ENCODE measurements at regions of chr10 and their contacts with region 1.

Region 1: GRCh38 chr10:97210543-97210961 is 24.8 kb upstream of the SLIT1 start:
- DNase-seq: peak; percentile 47 to 82 (median 71)
- ATAC-seq: peak; percentile 52
- H3K4me3 ChIP-seq: no peak overlapping the region
- H3K4me3 Mint-ChIP-seq: no peak overlapping the region
- H3K27ac ChIP-seq: no peak overlapping the region
- H3K27ac Mint-ChIP-seq: no peak overlapping the region
- H3K4me1 ChIP-seq: no peaks in the 10 kb centered on the region
- H3K4me1 Mint-ChIP-seq: no peaks in the 10 kb centered on the region
- H3K27me3 ChIP-seq: no peaks in the 10 kb centered on the region
- H3K27me3 Mint-ChIP-seq: peaks cover 1% of the 10 kb centered on the region
- CTCF ChIP-seq: peak; percentile 98

Region 2: GRCh38 chr10:96395931-96396877 is 814.3 kb before region 1 on chr10:
- CTCF ChIA-PET with region 1: interaction called, 10 read pairs
- POLR2A ChIA-PET with region 1: no interaction called
- intact Hi-C with region 1: loop called in 1 of 2 experiments (anchors 2 kb)
- DNase-seq: peak; percentile 16 to 78 (median 53)
- ATAC-seq: peak; percentile 88
- H3K4me3 ChIP-seq: no peak overlapping the region
- H3K4me3 Mint-ChIP-seq: peak overlapping the region; percentile 57
- H3K27ac ChIP-seq: no peak overlapping the region
- H3K27ac Mint-ChIP-seq: no peak overlapping the region
- H3K4me1 ChIP-seq: no peaks in the 10 kb centered on the region
- H3K4me1 Mint-ChIP-seq: no peaks in the 10 kb centered on the region
- H3K27me3 ChIP-seq: peaks cover 0 to 3% of the 10 kb centered on the region in 2 experiments
- H3K27me3 Mint-ChIP-seq: peaks cover 12% of the 10 kb centered on the region
- CTCF ChIP-seq: peak; percentile 79

Region 3: DNA sequence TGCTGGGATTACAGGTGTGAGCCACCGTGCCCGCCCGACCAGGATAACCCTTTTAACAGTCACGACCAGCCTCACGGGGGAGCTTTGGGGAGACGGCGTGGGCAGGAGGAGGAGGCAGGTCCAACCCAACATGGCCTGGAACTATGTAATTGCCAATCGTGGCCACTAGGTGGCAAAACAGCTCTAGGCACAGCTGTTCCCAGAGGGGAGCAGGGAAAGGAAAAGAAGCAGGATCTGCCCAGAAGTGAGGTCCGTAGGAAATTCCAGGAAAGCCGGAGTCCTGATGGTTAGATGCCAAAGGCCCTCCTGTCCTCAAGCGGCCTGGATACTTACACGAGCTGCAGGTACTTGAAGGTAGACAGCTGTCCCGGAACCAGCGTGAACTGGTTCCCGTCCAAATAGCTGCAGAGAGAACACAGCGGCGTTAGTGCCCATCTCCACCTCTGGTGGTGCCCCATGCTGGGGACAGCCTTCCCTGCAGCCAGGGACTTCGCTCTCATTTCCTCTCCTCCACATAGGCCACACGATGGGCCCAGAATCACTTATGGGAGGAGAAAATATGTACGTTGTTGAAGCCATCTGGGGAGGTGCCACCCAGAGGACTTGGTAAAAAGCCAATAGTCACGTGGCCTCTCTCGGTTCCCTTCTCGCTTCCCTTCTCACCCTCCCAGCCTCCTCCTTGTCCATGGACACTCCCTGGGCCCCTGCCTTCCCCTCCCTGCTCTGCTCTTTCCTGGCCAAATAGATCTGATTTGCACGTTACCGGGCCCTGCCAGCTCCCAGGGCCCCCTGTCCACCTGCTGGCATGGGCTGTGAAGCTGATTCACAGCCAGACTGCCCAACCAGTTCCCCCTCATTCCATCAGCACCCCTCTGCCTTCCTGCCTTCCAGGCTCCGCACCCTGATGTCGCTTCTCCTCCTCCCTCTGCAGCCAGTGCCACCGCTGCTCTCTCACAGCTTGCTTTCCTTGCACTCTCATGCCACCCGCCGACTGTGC is 172.9 kb before region 1 on chr10:
- CTCF ChIA-PET with region 1: interaction called, 48 read pairs
- POLR2A ChIA-PET with region 1: no interaction called
- intact Hi-C with region 1: loop called in 1 of 2 experiments (anchors 1 kb)
- DNase-seq: peak; percentile 35 to 81 (median 67)
- ATAC-seq: peak; percentile 92
- H3K4me3 ChIP-seq: peak overlapping the region; percentile 35 to 44
- H3K4me3 Mint-ChIP-seq: peak overlapping the region; percentile 73
- H3K27ac ChIP-seq: no peak overlapping the region
- H3K27ac Mint-ChIP-seq: no peak overlapping the region
- H3K4me1 ChIP-seq: no peaks in the 10 kb centered on the region
- H3K4me1 Mint-ChIP-seq: peaks cover 8% of the 10 kb centered on the region
- H3K27me3 ChIP-seq: no peaks in the 10 kb centered on the region
- H3K27me3 Mint-ChIP-seq: no peaks in the 10 kb centered on the region
- CTCF ChIP-seq: peak; percentile 92

Region 4: DNA sequence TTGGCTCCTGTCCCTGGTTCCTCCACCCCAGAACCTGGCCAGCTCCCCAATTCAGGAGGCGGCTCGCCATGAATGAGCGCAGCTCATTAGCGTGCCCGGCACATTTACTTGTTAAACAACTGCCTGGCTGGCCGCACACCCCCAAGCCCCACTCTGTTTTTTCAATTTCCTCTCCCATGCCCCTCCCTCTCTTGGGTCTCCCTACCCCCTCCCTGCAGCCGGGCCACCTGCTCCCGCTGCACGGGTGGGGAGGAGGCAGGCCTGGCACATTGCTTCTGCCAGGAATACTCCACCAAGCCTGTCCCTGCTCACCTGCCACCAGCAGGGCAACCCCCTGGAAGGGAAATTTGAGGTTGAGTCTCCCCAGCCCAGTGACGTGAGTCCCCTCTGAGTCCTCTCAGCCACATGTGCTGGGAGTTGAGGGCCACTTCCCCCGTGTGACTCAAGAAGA is 22.3 kb before region 1 on chr10:
- CTCF ChIA-PET with region 1: interaction called, 34 read pairs
- POLR2A ChIA-PET with region 1: no interaction called
- intact Hi-C with region 1: no loop called
- DNase-seq: no peak
- ATAC-seq: no peak
- H3K4me3 ChIP-seq: no peak overlapping the region
- H3K4me3 Mint-ChIP-seq: no peak overlapping the region
- H3K27ac ChIP-seq: no peak overlapping the region
- H3K27ac Mint-ChIP-seq: no peak overlapping the region
- H3K4me1 ChIP-seq: no peaks in the 10 kb centered on the region
- H3K4me1 Mint-ChIP-seq: peaks cover 11% of the 10 kb centered on the region
- H3K27me3 ChIP-seq: peaks cover 0 to 10% of the 10 kb centered on the region in 2 experiments
- H3K27me3 Mint-ChIP-seq: peaks cover 59% of the 10 kb centered on the region
- CTCF ChIP-seq: no peak

Region 5: DNA sequence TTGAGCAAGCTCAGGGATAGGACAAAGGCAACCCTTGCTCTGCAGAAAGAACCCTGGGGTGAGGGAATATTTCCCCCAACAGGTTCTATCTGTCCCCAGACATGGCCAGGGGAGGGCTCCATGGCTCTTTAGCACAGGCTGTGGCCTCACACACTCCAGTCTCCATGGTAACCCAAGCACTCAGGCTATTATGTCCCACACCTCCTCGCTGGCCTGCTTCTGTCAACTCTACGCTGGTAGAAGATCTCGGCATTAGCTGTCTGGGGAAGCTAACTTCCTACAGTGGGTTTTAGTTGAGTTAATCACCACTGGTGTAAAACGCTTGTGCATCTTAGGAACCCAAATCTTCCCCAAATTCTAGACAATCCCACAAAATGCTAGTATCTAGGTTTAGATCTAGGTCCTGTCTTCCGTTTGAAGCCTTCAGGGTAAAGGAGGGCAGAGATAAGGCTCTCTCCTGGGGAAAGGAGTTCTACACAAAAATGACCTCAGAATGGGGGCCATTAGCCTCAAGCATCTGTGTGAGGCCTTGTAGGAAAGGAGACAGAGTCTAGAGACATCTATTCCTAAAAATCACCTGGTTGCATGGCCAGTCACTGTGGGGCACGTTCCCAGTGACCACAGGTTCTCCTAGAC is 11.9 kb after region 1 on chr10:
- CTCF ChIA-PET with region 1: interaction called, 59 read pairs
- POLR2A ChIA-PET with region 1: no interaction called
- intact Hi-C with region 1: no loop called
- DNase-seq: no peak
- ATAC-seq: no peak
- H3K4me3 ChIP-seq: no peak overlapping the region
- H3K4me3 Mint-ChIP-seq: no peak overlapping the region
- H3K27ac ChIP-seq: no peak overlapping the region
- H3K27ac Mint-ChIP-seq: no peak overlapping the region
- H3K4me1 ChIP-seq: no peaks in the 10 kb centered on the region
- H3K4me1 Mint-ChIP-seq: no peaks in the 10 kb centered on the region
- H3K27me3 ChIP-seq: no peaks in the 10 kb centered on the region
- H3K27me3 Mint-ChIP-seq: no peaks in the 10 kb centered on the region
- CTCF ChIP-seq: no peak

Measured in CD8-positive, alpha-beta T cell (primary cell).